ENCODE measurements at regions of chr10 and their contacts with region 1.

Region 1: GRCh38 chr10:59372543-59372942 is 10.2 kb upstream of the FAM13C start:
- DNase-seq: no peak
- ATAC-seq: peak in 1 of 8 donors; percentile 25
- H3K4me3 ChIP-seq: no peak overlapping the region
- H3K27ac ChIP-seq: peak overlapping the region in 3 of 10 donors; percentile 17 to 50 (median 20)
- H3K4me1 ChIP-seq: peaks cover 0 to 27% (median 8%) of the 10 kb centered on the region in 9 donors
- H3K27me3 ChIP-seq: no peaks in the 10 kb centered on the region
- CTCF ChIP-seq: no peak

Region 2: DNA sequence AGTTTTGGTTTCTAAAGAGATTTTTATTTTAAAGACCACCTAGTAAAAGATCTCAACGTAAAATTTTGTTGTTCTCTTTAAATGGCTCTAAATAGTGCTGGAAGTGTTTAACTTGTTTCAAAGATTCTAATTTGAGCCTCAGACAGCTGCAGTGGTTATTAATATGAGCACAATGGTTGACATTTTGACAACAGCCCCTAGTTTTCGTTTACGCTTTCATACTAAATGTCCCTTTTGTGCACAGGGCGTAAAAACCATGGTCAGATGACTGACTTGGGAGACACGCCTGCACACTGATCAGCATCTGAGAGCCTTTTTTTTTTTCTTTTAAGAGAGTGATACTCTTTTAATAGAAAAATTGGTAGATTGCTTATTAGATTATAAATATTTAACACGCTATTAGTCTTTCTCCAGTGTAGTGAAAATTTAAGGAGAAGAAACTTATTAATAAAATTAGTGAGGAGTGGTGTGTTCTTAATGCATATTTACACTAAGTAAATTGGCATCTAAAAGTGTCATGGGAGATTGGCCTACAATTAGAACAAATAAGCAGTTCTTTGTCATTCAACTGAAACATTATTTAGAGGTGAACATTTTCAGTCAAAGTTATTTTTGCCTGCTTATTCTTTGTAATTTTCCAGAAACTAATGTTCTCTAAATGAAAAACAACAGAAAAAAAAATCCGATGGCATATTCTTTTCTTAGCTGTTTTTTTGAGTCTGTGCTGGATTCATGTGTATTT is 378.9 kb before region 1 on chr10:
- intact Hi-C with region 1: no loop called
- DNase-seq: no peak
- ATAC-seq: no peak
- H3K4me3 ChIP-seq: no peak overlapping the region
- H3K27ac ChIP-seq: no peak overlapping the region
- H3K4me1 ChIP-seq: peaks cover 0 to 9% (median 0%) of the 10 kb centered on the region in 9 donors
- H3K27me3 ChIP-seq: no peaks in the 10 kb centered on the region
- CTCF ChIP-seq: no peak

Region 3: DNA sequence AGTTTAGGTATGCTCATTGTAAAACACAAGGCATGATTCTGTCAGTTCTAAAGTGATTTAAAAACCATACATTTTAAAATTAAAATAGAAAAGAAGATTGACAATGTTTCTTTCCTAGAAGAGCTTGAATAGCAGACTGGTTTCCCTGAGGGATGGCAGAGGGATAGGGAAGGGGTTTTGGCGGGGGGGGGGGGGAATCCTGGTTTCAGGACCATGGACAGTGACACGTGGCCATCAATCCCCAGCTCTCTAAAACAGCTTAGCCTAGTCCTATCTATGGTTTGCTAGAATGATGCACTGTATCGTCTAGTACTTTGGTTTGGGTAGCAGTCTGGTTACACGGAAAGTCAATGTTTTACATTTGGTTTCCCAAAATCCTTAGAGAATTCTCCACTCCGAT is 107.4 kb before region 1 on chr10:
- intact Hi-C with region 1: loop called in 1 of 10 experiments (anchors 5 kb)
- DNase-seq: no peak
- ATAC-seq: no peak
- H3K4me3 ChIP-seq: no peak overlapping the region
- H3K27ac ChIP-seq: no peak overlapping the region
- H3K4me1 ChIP-seq: peaks cover 0 to 15% (median 0%) of the 10 kb centered on the region in 9 donors
- H3K27me3 ChIP-seq: no peaks in the 10 kb centered on the region
- CTCF ChIP-seq: no peak

Region 4: DNA sequence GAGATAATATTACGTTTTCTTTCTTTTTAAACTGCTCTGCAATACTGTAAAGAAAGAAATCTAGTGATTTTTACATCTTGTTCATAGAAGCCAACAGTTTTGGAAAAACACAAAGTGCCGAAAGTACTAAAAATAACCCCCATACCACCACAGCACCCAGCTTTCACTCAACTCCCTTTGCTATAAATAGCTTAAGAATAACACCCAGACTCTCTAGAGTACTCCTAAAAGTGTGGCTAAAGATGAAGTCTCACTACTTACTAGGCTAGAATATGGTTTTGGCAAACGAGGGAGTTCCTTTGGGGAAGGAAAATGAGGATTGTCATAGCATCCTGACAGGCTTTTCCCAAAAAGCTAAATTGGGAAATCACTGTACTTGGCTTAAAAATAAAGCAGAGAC is 1168.9 kb after region 1 on chr10:
- intact Hi-C with region 1: loop called in 1 of 10 experiments (anchors 5 kb)
- DNase-seq: no peak
- ATAC-seq: peak in 4 of 8 donors; percentile 33 to 77 (median 60)
- H3K4me3 ChIP-seq: peak overlapping the region in 2 of 10 donors; percentile 10 to 11
- H3K27ac ChIP-seq: no peak overlapping the region
- H3K4me1 ChIP-seq: peaks cover 0 to 23% (median 4%) of the 10 kb centered on the region in 9 donors
- H3K27me3 ChIP-seq: no peaks in the 10 kb centered on the region
- CTCF ChIP-seq: no peak

Measured in heart right ventricle (tissue), 16 donors.